ENCODE measurements at regions of chr10 and their contacts with region 1.

Region 1: DNA sequence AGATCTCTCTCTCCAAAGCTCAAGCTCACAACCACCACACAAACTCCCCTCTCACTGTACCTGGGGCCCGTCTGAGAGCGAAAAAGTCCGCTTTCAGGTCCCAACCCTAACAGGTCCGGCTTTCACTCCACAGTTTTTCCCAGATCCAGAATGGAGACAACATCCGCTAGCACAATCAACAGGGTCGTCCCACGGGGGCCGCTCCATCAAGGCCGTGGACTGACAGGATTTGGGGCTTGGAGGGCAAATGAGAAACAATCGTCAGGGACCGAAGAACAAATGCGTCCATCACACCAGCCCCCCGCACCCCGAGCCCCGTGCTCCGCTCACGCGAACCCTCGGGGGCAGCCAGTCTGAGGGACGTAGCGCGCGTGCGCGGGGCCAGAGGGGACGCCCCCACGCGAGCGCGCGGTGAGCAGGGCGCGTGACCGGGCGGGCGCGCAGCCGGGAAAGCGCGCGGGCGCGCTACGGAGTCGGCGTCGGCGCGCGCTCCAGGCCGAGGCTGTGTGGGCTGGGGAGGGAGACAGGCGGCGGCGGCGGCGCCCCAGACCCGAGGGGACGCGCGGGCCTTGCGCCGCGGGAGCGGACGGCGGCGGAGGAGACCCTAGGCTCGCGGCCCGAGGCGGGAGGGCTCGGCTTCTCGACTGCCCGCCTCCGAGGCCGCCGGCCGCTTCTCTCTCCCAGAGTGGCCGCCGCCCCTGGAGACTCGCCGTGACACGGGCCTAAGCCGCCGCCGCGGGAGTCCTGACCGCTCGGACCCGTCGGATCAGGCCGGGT is at the start of gene SLK:
- DNase-seq: peak; percentile 93
- H3K4me3 ChIP-seq: peak within 1 kb of the TSS; percentile 91
- H3K27ac ChIP-seq: peak within 1 kb of the TSS; percentile 49
- H3K4me1 ChIP-seq: peaks cover 30% of the 10 kb centered on the region
- CTCF ChIP-seq: no peak
- total RNA-seq, gene SLK: 19.0 and 19.9 TPM in 2 replicates

Region 2: GRCh38 chr10:103918053-103918846 is 48.6 kb before region 1 on chr10 and contains the start of gene STN1:
- CTCF ChIA-PET with region 1: interaction called, 3 read pairs
- POLR2A ChIA-PET with region 1: no interaction called
- intact Hi-C with region 1: loop called (anchors 2 kb)
- DNase-seq: peak; percentile 97
- H3K4me3 ChIP-seq: peak within 1 kb of the TSS; percentile 75
- H3K27ac ChIP-seq: peak within 1 kb of the TSS; percentile 55
- H3K4me1 ChIP-seq: peaks cover 28% of the 10 kb centered on the region
- CTCF ChIP-seq: peak; percentile 54
- total RNA-seq, gene STN1: 19.5 and 20.9 TPM in 2 replicates

Region 3: GRCh38 chr10:103983367-103983911 is 16.6 kb after region 1 on chr10:
- CTCF ChIA-PET with region 1: interaction called, 3 read pairs
- POLR2A ChIA-PET with region 1: interaction called, 5 read pairs
- intact Hi-C with region 1: loop called (anchors 2 kb)
- DNase-seq: peak; percentile 67
- H3K4me3 ChIP-seq: peak overlapping the region; percentile 44
- H3K27ac ChIP-seq: peak overlapping the region; percentile 56
- H3K4me1 ChIP-seq: peaks cover 18% of the 10 kb centered on the region
- CTCF ChIP-seq: no peak

Region 4: DNA sequence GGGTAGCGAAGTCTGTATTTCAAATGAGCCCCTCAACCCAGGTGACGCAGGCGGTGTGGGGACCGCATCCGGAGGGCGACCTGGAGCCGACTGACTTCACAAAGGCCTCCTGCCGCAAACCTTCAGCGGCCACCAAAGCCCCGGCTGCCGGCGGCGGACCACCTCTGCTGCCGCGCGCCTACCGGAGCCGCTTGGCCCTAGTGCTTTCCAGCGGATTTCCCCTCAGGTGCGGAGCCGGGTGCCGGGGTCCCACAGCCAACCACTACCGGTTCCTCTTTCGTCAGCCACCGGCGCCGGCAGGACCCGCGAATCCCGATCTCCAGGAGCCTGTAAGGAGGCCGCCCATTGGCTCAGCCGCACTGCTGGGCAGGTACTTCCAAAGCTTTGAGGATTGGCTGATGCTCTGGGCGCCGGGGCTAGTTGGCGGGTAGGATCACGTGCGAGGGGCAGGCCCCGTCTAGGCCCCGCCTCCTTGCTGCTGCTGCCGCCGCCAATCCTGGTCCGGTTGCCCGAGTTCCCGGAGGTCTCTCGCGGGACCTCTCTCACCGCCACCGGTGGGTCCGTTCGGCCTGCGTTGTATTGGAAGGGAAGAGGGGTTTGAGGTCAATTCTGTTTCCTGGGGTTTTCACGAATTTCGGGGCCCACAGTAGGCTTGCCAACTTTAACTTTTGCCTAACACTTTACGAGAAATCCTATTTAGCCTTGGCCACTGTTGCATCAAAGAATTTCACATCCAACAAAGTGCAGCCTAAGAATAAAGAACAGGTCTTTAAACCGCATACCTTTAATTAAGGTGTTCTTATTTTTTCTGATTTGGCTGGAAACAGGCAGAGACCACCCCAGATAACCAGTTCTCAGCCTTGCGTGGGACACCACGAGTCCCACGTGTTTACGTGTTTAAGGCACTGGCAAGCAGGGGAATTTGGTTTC is 302.1 kb after region 1 on chr10 and contains the start of gene GSTO2:
- CTCF ChIA-PET with region 1: no interaction called
- POLR2A ChIA-PET with region 1: no interaction called
- intact Hi-C with region 1: loop called (anchors 5 kb)
- DNase-seq: peak; percentile 99
- H3K4me3 ChIP-seq: peak within 1 kb of the TSS; percentile 88
- H3K27ac ChIP-seq: peak within 1 kb of the TSS; percentile 47
- H3K4me1 ChIP-seq: peaks cover 16% of the 10 kb centered on the region
- CTCF ChIP-seq: no peak
- total RNA-seq, gene GSTO2: 1.6 and 8.2 TPM in 2 replicates